ENCODE measurements at regions of chr10 and their contacts with region 1.

Region 1: GRCh38 chr10:13518076-13518692 is 10.6 kb downstream of the BEND7 start:
- DNase-seq: no peak
- H3K4me3 ChIP-seq: no peak overlapping the region
- CTCF ChIP-seq: peak; percentile 54

Region 2: DNA sequence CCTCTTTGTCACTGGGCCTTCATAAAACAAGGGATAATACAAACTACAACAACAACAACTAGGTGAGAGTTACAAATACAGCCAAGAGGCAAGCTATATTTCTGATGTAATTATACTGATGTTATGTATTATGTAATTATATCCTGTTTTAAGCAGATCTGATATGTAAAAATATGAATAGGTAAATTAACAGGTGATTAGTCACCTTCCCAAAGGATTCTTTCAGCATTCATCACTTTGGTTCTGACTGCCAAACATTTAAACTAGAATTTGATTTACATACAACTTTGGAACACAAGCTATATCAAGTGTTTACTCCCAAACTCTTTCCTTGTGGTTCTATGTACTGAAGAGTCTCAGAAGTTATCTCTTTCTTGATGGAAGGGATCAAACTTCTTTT is 43.1 kb before region 1 on chr10:
- CTCF ChIA-PET with region 1: no interaction called
- POLR2A ChIA-PET with region 1: no interaction called
- DNase-seq: no peak
- H3K4me3 ChIP-seq: no peak overlapping the region
- CTCF ChIP-seq: no peak

Region 3: GRCh38 chr10:13507578-13507977 is 10.6 kb before region 1 on chr10:
- CTCF ChIA-PET with region 1: interaction called, 12 read pairs
- POLR2A ChIA-PET with region 1: no interaction called
- DNase-seq: no peak
- H3K4me3 ChIP-seq: no peak overlapping the region
- CTCF ChIP-seq: no peak